ENCODE measurements at regions of chr3 and their contacts with region 1.

Region 1: GRCh38 chr3:42012935-42013690 is 51.2 kb upstream of the ULK4 start:
- DNase-seq: peak in 41 of 42 donors; percentile 17 to 82 (median 69)

Region 2: GRCh38 chr3:41508063-41508696 is 504.9 kb before region 1 on chr3:
- intact Hi-C with region 1: no loop called
- DNase-seq: no peak

Region 3: GRCh38 chr3:41961750-41962679 is 51.1 kb before region 1 on chr3 and contains the start of gene ULK4:
- intact Hi-C with region 1: loop called (anchors 5 kb)
- DNase-seq: peak; percentile 94 to 99 (median 98)

Region 4: GRCh38 chr3:42071904-42072592 is 58.9 kb after region 1 on chr3:
- intact Hi-C with region 1: loop called (anchors 2 kb)
- DNase-seq: peak; percentile 51 to 87 (median 79)

Region 5: GRCh38 chr3:42096796-42097565 is 83.9 kb after region 1 on chr3:
- intact Hi-C with region 1: loop called (anchors 5 kb)
- DNase-seq: peak in 29 of 42 donors; percentile 18 to 88 (median 61)

Region 6: DNA sequence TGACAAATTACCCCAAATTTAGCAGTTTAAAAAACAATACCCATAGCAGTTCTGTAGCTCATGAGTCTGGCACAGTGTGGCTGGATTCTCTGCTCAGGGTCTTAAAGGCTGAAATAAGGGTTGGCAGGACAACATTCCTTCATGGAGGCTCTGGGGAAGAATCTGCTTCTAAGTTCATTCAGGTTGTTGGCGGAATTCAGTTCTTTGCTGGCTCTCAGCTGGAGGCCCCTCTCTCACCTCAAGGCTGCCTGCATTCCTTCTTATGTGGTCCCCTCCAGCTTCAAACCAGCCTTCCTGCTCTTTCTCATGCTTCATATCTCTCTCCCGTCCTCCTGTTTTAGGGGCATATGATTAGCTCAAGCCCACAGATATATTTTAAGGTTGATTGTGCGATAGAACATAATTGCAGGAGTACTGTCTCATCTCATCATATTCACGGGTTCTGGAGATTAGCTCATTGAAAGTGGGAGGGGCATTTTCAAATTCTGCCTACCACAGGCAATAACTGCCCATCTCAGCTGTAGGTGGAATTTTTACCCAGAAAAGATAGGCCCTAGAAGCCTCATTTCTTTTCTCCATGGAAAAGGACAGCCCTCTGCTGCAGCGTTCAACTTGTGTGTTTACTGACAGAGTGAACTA is 634.8 kb after region 1 on chr3:
- intact Hi-C with region 1: no loop called
- DNase-seq: peak in 7 of 42 donors; percentile 5 to 50 (median 27)